IMR-90 (cell line): ENCODE measurements at regions of chr7 and their contacts with region 1.

Region 1: GRCh38 chr7:108002726-108003598 is at the start of gene LAMB1:
- DNase-seq: peak; percentile 65
- ATAC-seq: peak; percentile 83
- H3K4me3 ChIP-seq: peak within 1 kb of the TSS; percentile 88
- H3K27ac ChIP-seq: peak within 1 kb of the TSS; percentile 93
- H3K4me1 ChIP-seq: peaks cover 14% of the 10 kb centered on the region
- H3K27me3 ChIP-seq: no peaks in the 10 kb centered on the region
- CTCF ChIP-seq: no peak
- POLR2A ChIP-seq: 0 out of 2 replicates have a peak, but pooled peaks have one; percentile 23
- RAD21 ChIP-seq: no peak
- total RNA-seq, gene LAMB1: 117 TPM in 2 replicates

Region 2: DNA sequence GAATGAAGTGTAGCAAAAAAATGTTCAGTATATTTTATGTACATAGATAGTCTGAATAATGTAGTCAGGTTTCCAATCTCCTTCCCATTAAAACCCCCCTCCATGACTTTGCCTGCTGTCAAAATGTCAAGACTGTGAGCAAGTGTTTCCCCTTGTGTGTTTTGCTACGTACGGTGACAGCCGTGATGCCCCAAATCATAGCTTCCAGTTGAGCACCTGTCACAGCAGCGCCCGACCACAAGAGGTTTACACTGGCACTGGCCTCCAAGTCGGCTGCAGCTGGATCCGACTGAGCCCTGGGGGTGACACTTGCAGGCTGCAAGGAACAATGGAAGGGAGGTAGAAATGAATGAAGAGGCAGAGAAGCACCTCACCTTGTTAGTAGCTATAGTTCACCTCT is 64.9 kb after region 1 on chr7:
- CTCF ChIA-PET with region 1: no interaction called
- POLR2A ChIA-PET with region 1: no interaction called
- dilution Hi-C with region 1: no loop called
- in situ Hi-C with region 1: no loop called
- intact Hi-C with region 1: no loop called
- DNase-seq: no peak
- ATAC-seq: no peak
- H3K4me3 ChIP-seq: no peak overlapping the region
- H3K27ac ChIP-seq: no peak overlapping the region
- H3K4me1 ChIP-seq: peaks cover 2% of the 10 kb centered on the region; the same call in 1 of the 2 replicates
- H3K27me3 ChIP-seq: no peaks in the 10 kb centered on the region
- CTCF ChIP-seq: no peak
- POLR2A ChIP-seq: no peak
- RAD21 ChIP-seq: no peak

Region 3: DNA sequence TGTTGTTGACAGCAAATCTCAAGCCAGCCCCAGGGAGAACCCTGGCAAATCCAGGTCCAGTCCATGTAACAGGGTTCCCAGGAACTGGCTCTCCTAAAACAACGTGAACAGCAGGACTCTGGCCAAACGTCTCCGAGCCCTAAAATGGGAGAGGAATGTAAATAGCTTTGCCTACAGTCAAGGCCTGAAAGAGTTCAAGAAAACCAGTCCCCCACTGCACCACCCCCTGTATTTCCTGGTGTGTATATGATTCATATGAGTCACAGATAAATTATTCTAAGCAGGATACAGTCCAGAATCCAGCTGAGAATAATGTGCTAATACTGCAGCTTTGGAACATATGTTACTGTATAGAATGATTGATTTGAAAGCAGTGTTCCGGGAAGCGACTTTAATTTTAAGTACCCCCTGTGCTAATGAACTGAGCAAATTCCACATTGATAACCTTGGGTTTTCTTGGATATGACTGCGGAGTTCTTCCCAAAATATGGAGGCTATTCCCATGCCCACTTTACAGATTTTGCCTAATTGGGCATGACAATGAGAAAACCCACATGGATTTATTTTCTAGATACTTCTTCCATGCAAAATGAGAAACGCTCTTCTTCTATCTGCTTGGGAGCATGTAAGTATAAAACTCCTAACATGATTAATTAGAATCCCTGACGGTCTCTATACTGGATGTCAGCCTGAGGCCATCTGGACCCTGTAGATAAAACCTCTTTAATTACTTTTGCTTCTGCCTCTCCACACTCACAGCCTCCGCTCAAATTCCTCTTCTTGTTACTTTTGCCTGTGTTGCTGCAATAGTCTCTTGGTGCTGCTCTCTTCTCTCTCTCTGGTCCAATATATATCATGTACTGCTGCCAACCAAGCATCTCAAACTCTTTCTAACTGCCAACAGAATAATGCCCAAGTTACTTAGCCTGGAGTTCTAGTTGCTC is 77.0 kb after region 1 on chr7:
- CTCF ChIA-PET with region 1: interaction called, 3 read pairs
- POLR2A ChIA-PET with region 1: interaction called, 4 read pairs
- dilution Hi-C with region 1: no loop called
- in situ Hi-C with region 1: no loop called
- intact Hi-C with region 1: loop called (anchors 2 kb)
- DNase-seq: peak; percentile 95
- ATAC-seq: peak; percentile 89
- H3K4me3 ChIP-seq: peak overlapping the region; percentile 7; the same call in 1 of the 2 replicates
- H3K27ac ChIP-seq: peak overlapping the region; percentile 94
- H3K4me1 ChIP-seq: peaks cover 25% of the 10 kb centered on the region
- H3K27me3 ChIP-seq: no peaks in the 10 kb centered on the region
- CTCF ChIP-seq: no peak
- POLR2A ChIP-seq: no peak
- RAD21 ChIP-seq: no peak

Region 4: DNA sequence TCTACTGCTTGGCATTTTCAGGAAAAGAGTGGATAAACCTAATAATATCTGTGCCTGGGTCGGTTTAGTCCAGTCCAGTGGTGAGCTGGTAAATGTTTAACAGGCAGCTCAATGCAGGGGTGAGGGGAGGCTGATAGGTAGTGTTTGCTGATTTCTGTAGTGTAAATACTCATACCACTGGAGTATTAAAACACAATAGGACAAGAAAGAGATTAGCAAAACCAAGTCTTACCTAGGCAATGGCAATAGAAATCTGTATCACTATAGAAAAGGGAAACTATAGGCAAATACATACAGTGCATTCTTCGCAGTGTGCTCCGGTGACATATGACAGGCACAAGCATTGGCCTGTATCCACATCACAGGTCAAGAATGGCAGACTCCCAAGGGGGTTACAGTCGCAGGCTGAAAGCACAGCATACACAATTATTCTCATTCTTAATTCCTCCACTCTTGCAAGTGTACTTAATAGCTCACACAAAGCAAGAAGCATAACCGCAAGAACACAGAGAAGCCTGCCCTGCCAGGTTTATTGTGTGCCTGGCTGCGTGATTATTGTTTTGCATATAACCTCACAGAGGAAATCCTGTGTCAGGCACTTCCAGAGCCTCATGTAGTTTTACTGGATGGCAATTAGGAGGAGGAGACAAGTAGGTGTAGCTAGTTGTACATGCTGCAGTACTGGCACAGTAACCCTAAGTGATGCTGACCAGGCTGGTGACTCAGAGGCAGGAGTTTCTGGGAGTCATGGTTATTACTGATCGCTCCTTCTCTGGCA is 92.2 kb after region 1 on chr7:
- CTCF ChIA-PET with region 1: no interaction called
- POLR2A ChIA-PET with region 1: no interaction called
- dilution Hi-C with region 1: no loop called
- in situ Hi-C with region 1: no loop called
- intact Hi-C with region 1: loop called (anchors 5 kb)
- DNase-seq: peak; percentile 91
- ATAC-seq: peak; percentile 87
- H3K4me3 ChIP-seq: no peak overlapping the region
- H3K27ac ChIP-seq: peak overlapping the region; percentile 85; the same call in 1 of the 2 replicates
- H3K4me1 ChIP-seq: peaks cover 21% of the 10 kb centered on the region
- H3K27me3 ChIP-seq: no peaks in the 10 kb centered on the region
- CTCF ChIP-seq: no peak
- POLR2A ChIP-seq: no peak
- RAD21 ChIP-seq: no peak

Region 5: DNA sequence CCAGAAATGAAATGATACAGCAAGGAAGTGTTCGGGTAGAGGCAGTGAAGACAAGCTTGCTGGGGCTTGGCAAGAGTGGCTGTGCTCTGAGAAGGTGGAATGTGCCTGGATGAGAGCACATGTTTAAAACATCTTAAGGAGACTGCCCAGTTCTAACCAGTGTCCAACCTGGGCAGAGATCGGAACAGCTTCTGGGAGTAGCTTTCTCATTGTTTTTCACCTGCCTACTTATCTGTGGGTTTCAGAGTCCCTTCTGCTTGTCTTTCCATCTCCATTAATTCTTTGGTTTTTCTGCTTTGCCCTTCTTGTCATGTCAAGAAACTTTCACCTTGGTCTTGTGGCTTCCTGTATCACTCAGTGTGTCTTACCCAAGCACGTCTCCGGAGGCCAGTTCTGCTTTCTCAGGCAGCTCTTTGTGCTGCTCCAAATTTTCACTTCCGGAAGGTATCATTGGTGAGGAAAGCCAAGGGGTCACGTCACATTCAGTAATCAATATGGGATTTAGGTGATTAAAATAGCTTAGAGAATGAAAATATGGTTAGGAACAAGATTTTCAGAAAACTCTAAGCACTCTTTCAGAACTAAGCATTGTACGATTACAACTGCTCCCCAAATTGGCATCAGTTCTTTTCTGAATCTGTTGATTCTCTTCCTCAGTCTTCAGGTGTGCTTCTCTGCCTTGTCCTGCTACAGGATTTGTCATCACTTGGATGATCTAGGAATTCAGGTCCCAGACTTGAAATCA is 132.7 kb after region 1 on chr7:
- CTCF ChIA-PET with region 1: no interaction called
- POLR2A ChIA-PET with region 1: no interaction called
- dilution Hi-C with region 1: loop called (anchors 25 kb)
- in situ Hi-C with region 1: loop called (anchors 5 kb)
- intact Hi-C with region 1: no loop called
- DNase-seq: no peak
- ATAC-seq: no peak
- H3K4me3 ChIP-seq: no peak overlapping the region
- H3K27ac ChIP-seq: no peak overlapping the region
- H3K4me1 ChIP-seq: peaks cover 2% of the 10 kb centered on the region; the same call in 1 of the 2 replicates
- H3K27me3 ChIP-seq: no peaks in the 10 kb centered on the region
- CTCF ChIP-seq: no peak
- POLR2A ChIP-seq: no peak
- RAD21 ChIP-seq: no peak